ENCODE measurements at regions of chr1 and their contacts with region 1.

Region 1: GRCh38 chr1:178607718-178608408 is 95.0 kb downstream of the TEX35 start:
- DNase-seq: peak; percentile 45
- H3K4me3 ChIP-seq: no peak overlapping the region
- H3K27ac ChIP-seq: peak overlapping the region; percentile 98
- H3K4me1 ChIP-seq: peaks cover 74% of the 10 kb centered on the region
- CTCF ChIP-seq: no peak

Region 2: GRCh38 chr1:178566187-178566586 is 41.7 kb before region 1 on chr1:
- CTCF ChIA-PET with region 1: no interaction called
- POLR2A ChIA-PET with region 1: no interaction called
- intact Hi-C with region 1: no loop called
- DNase-seq: no peak
- H3K4me3 ChIP-seq: no peak overlapping the region
- H3K27ac ChIP-seq: no peak overlapping the region
- H3K4me1 ChIP-seq: peaks cover 18% of the 10 kb centered on the region
- CTCF ChIP-seq: no peak

Region 3: GRCh38 chr1:178587975-178588374 is 19.9 kb before region 1 on chr1:
- CTCF ChIA-PET with region 1: interaction called, 7 read pairs
- POLR2A ChIA-PET with region 1: interaction called, 288 read pairs
- intact Hi-C with region 1: no loop called
- DNase-seq: no peak
- H3K4me3 ChIP-seq: no peak overlapping the region
- H3K27ac ChIP-seq: no peak overlapping the region
- H3K4me1 ChIP-seq: peaks cover 45% of the 10 kb centered on the region
- CTCF ChIP-seq: peak; percentile 53

Region 4: GRCh38 chr1:178594133-178594532 is 13.7 kb before region 1 on chr1:
- CTCF ChIA-PET with region 1: interaction called, 5 read pairs
- POLR2A ChIA-PET with region 1: interaction called, 143 read pairs
- intact Hi-C with region 1: no loop called
- DNase-seq: no peak
- H3K4me3 ChIP-seq: no peak overlapping the region
- H3K27ac ChIP-seq: no peak overlapping the region
- H3K4me1 ChIP-seq: peaks cover 28% of the 10 kb centered on the region
- CTCF ChIP-seq: no peak

Region 5: DNA sequence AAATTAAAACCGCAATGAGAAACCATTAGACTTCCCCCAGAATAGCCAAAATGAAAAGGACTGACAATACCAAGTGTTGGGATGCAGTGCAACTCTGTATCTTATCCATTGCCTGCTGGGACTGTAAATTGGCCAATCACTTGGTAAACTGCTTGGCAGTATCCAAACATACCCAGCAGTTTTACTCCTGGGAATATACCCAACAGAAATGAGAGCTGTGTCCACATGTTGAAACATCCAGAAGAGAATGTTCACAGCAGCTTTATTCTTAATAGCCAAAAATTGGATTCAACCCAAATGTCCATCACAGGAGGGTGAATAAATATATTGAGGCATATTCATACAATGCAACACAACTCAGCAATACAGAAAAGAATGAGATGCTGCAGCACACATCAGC is 404.2 kb after region 1 on chr1:
- CTCF ChIA-PET with region 1: no interaction called
- POLR2A ChIA-PET with region 1: no interaction called
- intact Hi-C with region 1: no loop called
- DNase-seq: no peak
- H3K4me3 ChIP-seq: no peak overlapping the region
- H3K27ac ChIP-seq: no peak overlapping the region
- H3K4me1 ChIP-seq: no peaks in the 10 kb centered on the region
- CTCF ChIP-seq: no peak